ENCODE measurements at regions of chr10 and their contacts with region 1.

Region 1: DNA sequence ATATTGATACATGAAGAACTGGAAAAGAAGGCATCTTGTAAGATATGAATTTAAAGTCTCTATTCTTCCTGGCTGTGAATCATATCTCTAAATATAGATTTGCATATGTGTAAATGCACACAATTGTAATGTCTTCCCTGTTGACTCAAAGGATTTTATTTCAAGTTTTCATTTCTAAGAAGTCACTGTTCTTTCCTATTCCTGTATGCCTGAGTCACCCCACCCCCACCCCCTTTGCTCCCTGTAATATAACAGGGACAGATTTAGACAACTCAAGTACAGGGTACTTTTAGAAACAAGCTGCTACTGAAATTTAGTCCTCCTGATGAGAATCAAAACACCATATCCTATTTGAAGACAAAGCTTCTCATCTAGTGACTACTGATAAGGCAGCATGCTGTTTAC is 43.0 kb upstream of the HECTD2 start:
- DNase-seq: no peak
- ATAC-seq: no peak
- H3K4me3 ChIP-seq: no peak overlapping the region
- H3K27ac ChIP-seq: no peak overlapping the region
- H3K4me1 ChIP-seq: no peaks in the 10 kb centered on the region
- H3K27me3 ChIP-seq: peaks cover 7% of the 10 kb centered on the region
- CTCF ChIP-seq: no peak

Region 2: DNA sequence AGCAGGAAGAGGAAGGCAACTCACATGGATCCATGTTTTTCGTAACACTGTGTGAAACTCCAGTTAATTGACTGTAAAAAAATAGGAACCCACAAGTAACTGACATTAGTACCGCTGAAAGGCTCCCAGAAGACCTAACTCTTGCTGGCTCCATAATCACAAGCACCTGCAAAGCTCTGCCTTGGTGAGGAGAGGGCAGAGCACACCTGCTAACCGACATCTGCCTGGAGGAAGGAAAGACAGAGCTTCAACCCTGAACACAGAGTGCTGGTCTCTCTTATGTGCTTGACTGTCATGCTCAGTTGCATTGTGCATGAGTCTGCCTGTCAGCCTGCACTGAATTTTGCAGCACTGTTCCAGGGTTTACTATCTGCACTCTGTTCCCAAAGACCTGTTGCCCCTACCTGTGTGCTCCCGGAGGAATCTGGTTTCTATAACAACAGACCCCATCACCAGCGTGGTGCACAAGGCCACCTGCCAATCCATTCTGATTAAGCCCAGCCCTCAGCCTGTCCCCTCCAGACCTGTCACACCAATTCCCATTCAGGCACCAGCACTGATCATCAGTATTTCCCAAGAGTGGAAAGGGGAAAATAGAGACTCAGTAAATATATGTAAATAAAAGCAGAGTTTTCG is 383.1 kb before region 1 on chr10:
- CTCF ChIA-PET with region 1: no interaction called
- POLR2A ChIA-PET with region 1: no interaction called
- in situ Hi-C with region 1: no loop called
- intact Hi-C with region 1: no loop called
- DNase-seq: no peak
- ATAC-seq: no peak
- H3K4me3 ChIP-seq: no peak overlapping the region
- H3K27ac ChIP-seq: no peak overlapping the region
- H3K4me1 ChIP-seq: no peaks in the 10 kb centered on the region
- H3K27me3 ChIP-seq: no peaks in the 10 kb centered on the region; the same call in 1 of the 2 replicates
- CTCF ChIP-seq: no peak

Region 3: GRCh38 chr10:91220194-91220953 is 146.8 kb before region 1 on chr10 and contains the start of gene PCGF5:
- CTCF ChIA-PET with region 1: no interaction called
- POLR2A ChIA-PET with region 1: no interaction called
- in situ Hi-C with region 1: no loop called
- intact Hi-C with region 1: no loop called
- DNase-seq: no peak
- ATAC-seq: peak; percentile 100
- H3K4me3 ChIP-seq: peak within 1 kb of the TSS; percentile 77 to 80
- H3K27ac ChIP-seq: peak within 1 kb of the TSS; percentile 72
- H3K4me1 ChIP-seq: peaks cover 18% of the 10 kb centered on the region; the same call in 1 of the 2 replicates
- H3K27me3 ChIP-seq: peaks cover 16% of the 10 kb centered on the region
- CTCF ChIP-seq: peak; percentile 30
- total RNA-seq, gene PCGF5: 23.3 TPM

Region 4: GRCh38 chr10:91298224-91298871 is 68.8 kb before region 1 on chr10:
- CTCF ChIA-PET with region 1: interaction called, 8 read pairs
- POLR2A ChIA-PET with region 1: no interaction called
- in situ Hi-C with region 1: no loop called
- intact Hi-C with region 1: loop called (anchors 5 kb)
- DNase-seq: peak; percentile 71
- ATAC-seq: peak; percentile 97
- H3K4me3 ChIP-seq: peak overlapping the region; percentile 44 to 81
- H3K27ac ChIP-seq: peak overlapping the region; percentile 64
- H3K4me1 ChIP-seq: no peaks in the 10 kb centered on the region; the same call in 1 of the 2 replicates
- H3K27me3 ChIP-seq: no peaks in the 10 kb centered on the region
- CTCF ChIP-seq: peak; percentile 99

Region 5: GRCh38 chr10:91479583-91479982 is 112.5 kb after region 1 on chr10:
- CTCF ChIA-PET with region 1: no interaction called
- POLR2A ChIA-PET with region 1: interaction called, 10 read pairs
- in situ Hi-C with region 1: no loop called
- intact Hi-C with region 1: no loop called
- DNase-seq: no peak
- ATAC-seq: no peak
- H3K4me3 ChIP-seq: no peak overlapping the region
- H3K27ac ChIP-seq: no peak overlapping the region
- H3K4me1 ChIP-seq: no peaks in the 10 kb centered on the region
- H3K27me3 ChIP-seq: no peaks in the 10 kb centered on the region
- CTCF ChIP-seq: no peak

Region 6: DNA sequence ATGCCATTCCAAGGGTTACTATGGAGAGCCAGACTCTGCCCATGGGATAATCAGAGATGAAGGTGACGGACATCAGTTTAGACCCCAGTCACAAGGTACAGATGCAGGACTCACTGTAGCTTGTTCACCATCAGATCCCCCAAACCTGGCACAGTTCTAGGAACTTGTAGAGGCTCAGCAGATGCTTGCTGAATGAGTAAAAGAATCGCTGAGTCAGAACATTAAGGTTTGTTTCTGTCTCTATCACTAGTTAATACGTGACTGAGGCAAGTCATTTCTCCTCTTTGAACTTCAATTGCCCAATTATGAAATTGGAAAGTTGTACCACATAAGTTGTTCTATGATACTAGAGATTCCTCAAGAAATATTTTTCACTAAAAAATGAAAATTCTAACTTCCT is 200.7 kb after region 1 on chr10:
- CTCF ChIA-PET with region 1: interaction called, 13 read pairs
- POLR2A ChIA-PET with region 1: no interaction called
- in situ Hi-C with region 1: no loop called
- intact Hi-C with region 1: no loop called
- DNase-seq: no peak
- ATAC-seq: no peak
- H3K4me3 ChIP-seq: no peak overlapping the region
- H3K27ac ChIP-seq: no peak overlapping the region
- H3K4me1 ChIP-seq: no peaks in the 10 kb centered on the region
- H3K27me3 ChIP-seq: no peaks in the 10 kb centered on the region
- CTCF ChIP-seq: no peak

Measured in Panc1 (cell line).